ENCODE measurements at regions of chr2 and their contacts with region 1.

Region 1: DNA sequence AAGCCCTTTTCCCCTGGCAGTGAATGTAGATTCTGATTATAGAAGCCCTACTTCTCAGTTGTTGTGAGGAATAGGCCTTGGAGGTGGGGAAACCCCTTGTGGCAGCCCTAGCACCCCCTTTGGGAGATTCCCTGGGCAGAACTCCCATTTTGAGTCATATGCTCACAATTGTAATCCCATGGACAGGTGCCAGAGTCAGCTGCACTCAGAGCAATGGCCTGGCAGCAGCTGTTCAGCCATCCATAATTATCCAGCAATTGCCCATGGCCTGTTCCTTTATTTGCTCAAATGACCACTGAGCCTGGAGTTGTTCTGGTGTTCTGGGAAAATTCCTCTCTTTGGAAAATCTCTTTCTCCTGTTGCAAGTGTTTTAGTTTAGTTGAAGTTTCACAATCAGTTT is 71.7 kb downstream of the PTRHD1 start:
- DNase-seq: peak; percentile 86
- H3K4me3 ChIP-seq: no peak overlapping the region
- H3K27ac ChIP-seq: peak overlapping the region; percentile 47 to 57 (median 49)
- H3K4me1 ChIP-seq: peaks cover 0 to 27% (median 17%) of the 10 kb centered on the region in 4 donors
- H3K27me3 ChIP-seq: no peaks in the 10 kb centered on the region
- CTCF ChIP-seq: no peak
- EP300 ChIP-seq: no peak
- POLR2A ChIP-seq: no peak

Region 2: GRCh38 chr2:24490674-24491625 is 230.5 kb before region 1 on chr2 and contains the start of gene NCOA1:
- intact Hi-C with region 1: loop called (anchors 10 kb)
- DNase-seq: peak; percentile 95
- H3K4me3 ChIP-seq: peak within 1 kb of the TSS; percentile 87 to 96 (median 92)
- H3K27ac ChIP-seq: peak within 1 kb of the TSS; percentile 93 to 94 (median 94)
- H3K4me1 ChIP-seq: peaks cover 2 to 38% (median 30%) of the 10 kb centered on the region in 4 donors
- H3K27me3 ChIP-seq: no peaks in the 10 kb centered on the region
- CTCF ChIP-seq: no peak
- EP300 ChIP-seq: no peak
- POLR2A ChIP-seq: peak in 1 of 2 donors; percentile 47
- total RNA-seq, gene NCOA1: 49.2 to 61.7 (median 51.8) TPM